PC-3 (cell line): ENCODE measurements at regions of chr5 and their contacts with region 1.

Region 1: DNA sequence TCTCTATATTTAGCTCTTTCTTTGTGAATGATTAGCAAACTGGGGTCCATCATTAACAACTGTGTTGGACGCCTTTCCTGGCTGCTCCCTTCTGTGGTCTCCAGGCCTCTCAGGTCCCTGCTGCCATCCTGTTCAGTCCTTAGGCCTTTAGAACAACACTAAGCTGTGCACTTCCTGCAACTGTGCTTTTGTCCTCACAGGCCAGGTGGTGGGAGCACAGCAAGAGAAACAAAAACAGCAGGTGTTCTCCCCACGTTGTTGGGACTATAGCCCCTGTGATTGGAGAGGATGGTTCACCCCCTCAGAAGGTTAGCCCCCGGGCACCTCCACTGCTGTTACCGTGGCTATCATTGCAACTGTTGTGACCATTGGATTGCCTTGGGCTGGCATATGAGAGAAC is 41.7 kb upstream of the CLINT1 start:
- DNase-seq: no peak
- ATAC-seq: no peak
- H3K4me3 ChIP-seq: no peak overlapping the region
- H3K27ac ChIP-seq: no peak overlapping the region
- H3K4me1 ChIP-seq: no peaks in the 10 kb centered on the region
- H3K27me3 ChIP-seq: 0 out of 2 replicates have a peak, but pooled peaks cover 3% of the 10 kb centered on the region
- CTCF ChIP-seq: no peak

Region 2: DNA sequence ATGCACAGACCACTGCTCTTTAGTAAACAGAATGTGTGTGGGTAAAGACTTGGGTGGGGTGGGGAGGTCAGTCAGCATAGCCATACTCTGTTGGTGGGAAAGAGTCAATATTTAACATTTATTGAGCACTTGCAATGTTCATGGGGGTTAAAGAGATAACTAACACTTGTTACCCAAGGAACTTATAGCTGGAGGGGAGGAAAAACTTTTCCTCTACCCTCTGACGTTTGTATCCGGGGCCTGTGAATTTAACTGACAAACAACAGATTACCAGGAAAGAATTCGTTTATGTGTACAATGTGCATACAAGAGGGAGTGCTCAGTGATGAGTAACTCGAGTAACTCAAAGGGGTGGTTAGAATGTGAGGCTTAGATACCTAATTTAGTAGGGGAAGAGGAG is 34.9 kb before region 1 on chr5:
- CTCF ChIA-PET with region 1: no interaction called
- POLR2A ChIA-PET with region 1: interaction called, 5 read pairs
- intact Hi-C with region 1: loop called (anchors 1 kb)
- DNase-seq: peak; percentile 90
- ATAC-seq: peak; percentile 96
- H3K4me3 ChIP-seq: no peak overlapping the region
- H3K27ac ChIP-seq: peak overlapping the region; percentile 48
- H3K4me1 ChIP-seq: peaks cover 12% of the 10 kb centered on the region
- H3K27me3 ChIP-seq: no peaks in the 10 kb centered on the region
- CTCF ChIP-seq: no peak